ENCODE measurements at regions of chr6 and their contacts with region 1.

Region 1: DNA sequence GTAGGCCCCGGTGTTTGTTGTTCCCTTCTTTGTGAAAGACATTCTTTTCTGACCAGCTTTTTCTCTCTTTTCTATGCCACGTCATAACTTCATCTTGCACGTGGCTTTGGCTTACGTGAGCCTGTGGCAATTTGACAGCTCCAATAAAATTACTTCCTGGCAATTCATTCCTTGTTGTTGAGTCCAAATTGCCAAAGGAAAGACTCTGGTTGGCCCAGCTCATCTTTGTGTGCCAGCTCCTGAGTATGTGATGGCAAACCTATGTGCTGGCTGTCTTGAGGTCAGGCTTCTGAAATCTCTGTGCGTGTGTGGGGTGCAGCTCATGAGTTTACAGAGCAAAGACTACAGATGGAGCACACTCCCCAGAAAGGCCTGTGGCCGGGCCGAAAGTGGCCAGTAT is 272.5 kb upstream of the SGK1 start:
- DNase-seq: no peak
- H3K4me3 ChIP-seq: no peak overlapping the region
- H3K27ac ChIP-seq: no peak overlapping the region
- H3K4me1 ChIP-seq: no peaks in the 10 kb centered on the region
- H3K27me3 ChIP-seq: no peaks in the 10 kb centered on the region
- CTCF ChIP-seq: no peak
- POLR2A ChIP-seq: no peak

Region 2: GRCh38 chr6:134267917-134268361 is 322.5 kb before region 1 on chr6:
- intact Hi-C with region 1: loop called (anchors 10 kb)
- DNase-seq: no peak
- H3K4me3 ChIP-seq: no peak overlapping the region
- H3K27ac ChIP-seq: peak overlapping the region in 1 of 2 donors; percentile 57
- H3K4me1 ChIP-seq: no peaks in the 10 kb centered on the region
- H3K27me3 ChIP-seq: no peaks in the 10 kb centered on the region
- CTCF ChIP-seq: no peak
- POLR2A ChIP-seq: no peak